Astrocyte of the cerebellum (primary cell): ENCODE measurements at regions of chr1 and their contacts with region 1.

Region 1: GRCh38 chr1:18069903-18070302 is 37.7 kb upstream of the IGSF21 start:
- DNase-seq: no peak
- H3K4me3 ChIP-seq: no peak overlapping the region
- CTCF ChIP-seq: no peak

Region 2: DNA sequence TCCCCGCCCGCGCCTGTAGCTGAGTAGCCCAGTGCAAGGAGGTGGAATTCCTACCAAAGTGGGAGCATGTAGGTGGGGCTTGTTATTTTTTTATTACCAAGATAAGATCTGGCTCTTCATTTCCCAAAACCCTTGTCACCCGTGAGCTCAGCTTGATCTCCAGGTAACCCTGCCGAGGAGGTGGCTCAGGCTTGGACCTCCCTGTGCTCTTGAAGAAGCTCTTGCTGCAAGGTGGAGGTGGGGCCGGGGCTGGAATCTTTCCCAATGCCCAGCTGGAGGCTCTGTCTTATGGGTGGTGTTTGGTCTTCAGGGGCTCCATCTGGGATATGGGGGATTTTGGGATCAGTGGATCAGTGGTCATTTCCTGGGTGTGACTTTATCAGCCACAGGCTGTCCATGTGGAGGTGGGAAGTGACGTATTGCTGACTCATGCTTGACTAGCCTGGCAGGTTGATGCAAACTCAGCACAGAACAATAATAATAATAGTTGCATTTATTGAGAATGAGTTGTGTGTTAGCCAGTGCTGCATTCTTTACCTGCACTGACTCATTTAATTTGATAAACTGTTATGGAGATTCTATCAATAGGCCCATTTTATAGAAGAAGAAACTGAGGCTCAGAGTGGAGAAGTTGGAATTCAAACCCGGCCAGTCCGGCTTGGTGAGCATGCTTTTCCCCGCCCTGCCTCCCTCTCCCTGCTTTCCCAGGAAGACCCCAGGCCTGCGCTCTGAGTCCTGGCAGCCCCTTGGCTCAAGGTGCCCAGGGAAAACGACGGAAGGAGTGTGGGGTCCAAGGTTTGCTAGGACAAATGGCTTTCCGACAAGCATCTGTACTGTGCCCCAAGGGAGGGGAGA is 721.6 kb before region 1 on chr1:
- in situ Hi-C with region 1: no loop called
- DNase-seq: no peak
- H3K4me3 ChIP-seq: no peak overlapping the region
- CTCF ChIP-seq: no peak

Region 3: DNA sequence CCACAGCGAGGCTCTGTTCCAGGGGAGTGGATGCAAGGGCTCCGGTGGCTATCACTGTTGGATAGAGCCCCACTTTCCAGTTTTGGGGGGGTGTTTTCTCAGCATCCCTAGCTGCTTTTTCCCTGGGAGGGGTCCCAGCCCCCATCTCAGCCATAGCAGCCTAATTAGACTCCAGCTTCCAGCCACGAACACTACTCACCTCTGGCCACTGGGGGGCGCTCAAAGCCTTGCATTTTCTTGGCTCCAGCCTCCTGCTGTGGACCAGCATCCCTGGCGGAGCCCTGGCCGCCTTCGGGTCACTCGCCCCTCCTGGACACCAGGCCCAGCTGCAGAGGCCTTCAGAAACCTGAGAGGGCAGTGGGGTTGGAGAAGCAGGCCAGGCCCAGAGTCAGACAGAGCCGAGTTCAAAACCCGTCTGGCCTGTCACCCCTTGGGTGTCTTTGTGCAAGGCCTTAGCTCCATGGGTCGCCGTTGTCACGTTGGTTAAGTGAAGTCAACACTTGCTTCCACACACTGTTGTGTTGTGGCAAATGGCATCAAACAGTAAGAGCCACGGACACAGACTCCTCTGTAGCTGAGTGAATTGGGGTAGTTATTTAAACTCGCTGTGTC is 408.3 kb before region 1 on chr1:
- in situ Hi-C with region 1: no loop called
- DNase-seq: peak; percentile 19
- H3K4me3 ChIP-seq: no peak overlapping the region
- CTCF ChIP-seq: peak; percentile 85

Region 4: GRCh38 chr1:18118078-18118477 is 48.2 kb after region 1 on chr1:
- in situ Hi-C with region 1: loop called (anchors 5 kb)
- DNase-seq: no peak
- H3K4me3 ChIP-seq: no peak overlapping the region
- CTCF ChIP-seq: no peak

Region 5: GRCh38 chr1:18175530-18176377 is 105.9 kb after region 1 on chr1:
- in situ Hi-C with region 1: no loop called
- DNase-seq: no peak
- H3K4me3 ChIP-seq: no peak overlapping the region
- CTCF ChIP-seq: no peak